ENCODE measurements at regions of chr5 and their contacts with region 1.

Region 1: GRCh38 chr5:172612771-172613170 is 28.3 kb upstream of the NEURL1B start:
- DNase-seq: no peak
- H3K4me3 ChIP-seq: no peak overlapping the region
- CTCF ChIP-seq: no peak

Region 2: DNA sequence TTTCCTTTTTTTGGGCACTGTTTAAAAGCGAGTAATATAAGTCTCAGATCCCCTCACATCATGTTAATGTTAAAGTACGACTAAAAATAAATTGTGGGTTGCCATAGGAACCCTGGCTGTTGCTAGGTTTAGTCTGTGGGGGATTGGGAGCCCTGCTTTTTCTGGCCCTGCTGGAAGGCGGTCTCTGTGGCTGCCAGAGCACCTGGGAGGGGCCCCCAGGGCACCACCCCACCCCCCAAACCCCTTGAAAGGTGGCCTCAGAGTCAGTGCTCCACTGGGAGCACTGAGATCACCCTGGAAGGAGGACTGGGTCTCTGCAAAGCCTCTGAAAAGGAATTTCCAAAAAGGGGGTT is 37.9 kb before region 1 on chr5:
- in situ Hi-C with region 1: loop called (anchors 5 kb)
- DNase-seq: no peak
- H3K4me3 ChIP-seq: no peak overlapping the region
- CTCF ChIP-seq: no peak

Region 3: DNA sequence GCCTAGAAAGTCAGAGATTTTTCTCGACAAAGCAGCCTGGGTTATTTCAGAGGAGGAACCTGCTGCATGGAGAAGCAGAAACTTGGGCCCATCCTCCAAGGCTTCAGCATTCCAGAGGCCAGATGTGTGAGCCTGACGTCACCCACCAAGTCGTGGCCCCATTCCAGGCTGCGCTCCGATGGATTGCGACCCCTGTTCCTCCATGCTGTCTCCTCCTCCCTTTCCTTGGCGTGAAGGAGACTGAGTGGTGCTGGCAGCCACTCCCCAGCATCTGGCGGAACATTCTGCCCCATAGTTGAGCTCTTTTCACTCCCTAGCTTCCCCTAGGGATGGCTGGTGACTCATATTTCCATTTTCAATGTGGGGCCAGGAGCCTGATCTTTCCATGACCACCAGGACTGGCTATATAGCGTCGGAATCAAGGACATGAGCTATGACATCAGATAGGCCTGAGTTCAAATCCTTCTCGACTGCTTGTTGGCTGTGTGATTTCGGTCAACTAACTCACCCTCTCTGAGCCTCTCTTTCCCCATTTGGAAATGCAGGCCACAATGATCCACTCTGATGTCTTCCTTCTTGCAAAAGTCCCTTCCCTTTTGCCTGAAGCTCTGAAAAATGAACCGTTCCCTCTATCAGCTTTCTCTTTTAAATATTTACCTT is 182.7 kb after region 1 on chr5:
- in situ Hi-C with region 1: no loop called
- DNase-seq: peak; percentile 93
- H3K4me3 ChIP-seq: no peak overlapping the region
- CTCF ChIP-seq: no peak

Measured in astrocyte of the cerebellum (primary cell).